Naive thymus-derived CD8-positive, alpha-beta T cell (primary cell): ENCODE measurements at regions of chr2 and their contacts with region 1.

Region 1: DNA sequence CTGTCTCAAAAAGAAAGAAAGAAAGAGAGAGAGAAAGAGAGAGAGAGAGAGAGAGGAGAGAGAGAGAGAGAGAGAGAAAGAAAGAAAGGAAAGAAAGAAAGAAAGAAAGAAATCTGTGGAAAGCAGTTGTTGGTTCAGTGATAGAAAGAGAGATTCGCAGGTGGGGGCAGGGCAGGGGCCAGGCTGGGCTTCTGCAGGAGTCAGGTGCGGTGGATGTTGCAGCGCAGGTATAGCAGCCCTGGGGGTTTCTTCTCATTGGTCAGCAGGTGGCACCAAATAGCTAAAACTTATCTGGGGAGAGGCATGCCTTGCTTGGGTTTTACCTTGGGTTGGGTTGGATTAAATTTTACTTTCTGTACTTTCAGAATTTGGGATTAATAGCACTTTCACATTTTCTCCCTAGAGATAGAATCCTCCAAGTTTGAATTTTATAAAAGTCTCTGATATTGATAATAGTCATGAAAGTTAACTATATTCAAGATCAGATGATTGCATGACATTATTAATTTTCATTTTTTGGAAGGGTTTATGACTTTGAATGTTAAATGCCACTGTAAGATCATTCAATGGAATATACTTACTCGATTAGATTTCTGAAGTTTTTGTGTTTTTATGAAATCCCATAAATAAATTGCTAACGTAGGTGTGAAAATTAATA is 66.6 kb downstream of the SPTBN1 start:
- DNase-seq: peak; percentile 45 to 82 (median 73)
- ATAC-seq: peak; percentile 100
- H3K4me3 Mint-ChIP-seq: peak overlapping the region in 4 of 10 donors; percentile 30 to 62 (median 36)
- H3K27ac Mint-ChIP-seq: peak overlapping the region in 6 of 10 donors; percentile 14 to 93 (median 55)
- H3K4me1 Mint-ChIP-seq: peaks cover 4 to 7% (median 4%) of the 10 kb centered on the region in 4 donors
- H3K27me3 Mint-ChIP-seq: peaks cover 3 to 15% (median 5%) of the 10 kb centered on the region in 5 donors

Region 2: DNA sequence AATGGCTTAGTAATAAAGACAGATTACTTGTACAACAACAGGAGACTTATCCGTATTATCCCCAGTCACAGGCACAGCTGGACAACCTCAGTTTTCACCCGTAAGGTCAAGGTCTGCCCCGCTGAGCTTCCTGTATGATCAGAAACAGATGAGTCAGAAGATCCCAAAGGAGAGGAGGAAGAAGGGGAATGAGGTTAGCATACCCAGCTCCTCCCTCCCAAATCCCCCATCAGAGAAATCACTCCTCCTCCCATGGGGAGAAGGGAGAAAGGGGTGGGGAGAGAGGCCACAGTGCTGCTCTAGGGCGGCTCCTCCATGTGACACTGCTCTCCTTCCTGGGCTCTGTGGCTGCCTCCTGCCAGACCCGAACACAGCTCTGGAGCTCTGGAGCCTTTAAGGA is 120.4 kb before region 1 on chr2:
- POLR2A ChIA-PET with region 1: no interaction called
- DNase-seq: no peak
- ATAC-seq: no peak
- H3K4me3 Mint-ChIP-seq: no peak overlapping the region
- H3K27ac Mint-ChIP-seq: no peak overlapping the region
- H3K4me1 Mint-ChIP-seq: peaks cover 0 to 9% (median 5%) of the 10 kb centered on the region in 4 donors
- H3K27me3 Mint-ChIP-seq: peaks cover 0 to 8% (median 0%) of the 10 kb centered on the region in 5 donors

Region 3: GRCh38 chr2:54541995-54542394 is 19.2 kb after region 1 on chr2:
- POLR2A ChIA-PET with region 1: no interaction called
- DNase-seq: no peak
- ATAC-seq: no peak
- H3K4me3 Mint-ChIP-seq: no peak overlapping the region
- H3K27ac Mint-ChIP-seq: no peak overlapping the region
- H3K4me1 Mint-ChIP-seq: peaks cover 0 to 5% (median 2%) of the 10 kb centered on the region in 4 donors
- H3K27me3 Mint-ChIP-seq: peaks cover 0 to 2% (median 0%) of the 10 kb centered on the region in 5 donors

Region 4: DNA sequence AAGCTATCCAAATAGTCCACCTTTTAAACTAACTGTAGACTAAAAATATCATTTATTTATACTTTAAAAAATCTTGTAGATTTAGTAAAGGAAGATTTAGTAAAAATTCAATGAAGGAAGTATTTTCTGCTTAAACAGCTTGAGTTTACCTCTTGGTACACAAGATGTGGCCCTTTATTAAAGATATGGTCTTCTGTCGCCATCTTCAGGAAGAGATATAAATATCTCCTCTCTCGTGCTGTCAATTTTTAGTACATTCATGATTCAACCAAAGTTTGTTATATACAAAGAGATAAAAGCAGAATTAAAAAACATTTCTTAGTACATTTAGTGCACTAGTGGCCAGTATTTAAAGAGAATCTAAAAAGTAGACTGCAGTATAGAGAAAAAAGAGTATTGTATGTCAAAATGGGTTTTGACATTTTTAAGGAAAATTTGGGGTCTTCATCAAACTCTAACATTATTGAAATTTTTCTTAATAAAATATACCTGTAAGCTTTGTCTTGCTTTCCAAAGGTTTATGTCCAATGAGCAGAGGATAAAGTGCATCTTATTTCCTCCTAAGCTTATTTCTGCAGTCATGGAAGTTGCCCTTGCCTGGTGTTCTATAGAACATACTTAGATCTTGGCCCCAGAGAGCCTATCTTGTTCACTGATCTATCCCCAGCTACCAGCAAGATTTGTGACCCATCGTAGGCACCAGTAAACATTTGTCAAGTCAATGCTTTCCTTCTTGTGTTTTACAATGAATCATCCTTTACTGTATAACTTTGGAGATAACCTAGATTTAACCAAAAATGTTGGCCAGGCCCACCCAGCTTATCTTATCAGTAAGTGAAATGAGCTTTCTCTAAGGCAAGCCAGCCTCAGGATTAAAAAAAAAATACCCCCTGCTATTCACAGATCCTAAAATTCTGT is 182.2 kb after region 1 on chr2:
- POLR2A ChIA-PET with region 1: interaction called, 10 read pairs
- DNase-seq: peak in 3 of 10 donors; percentile 54 to 67 (median 62)
- ATAC-seq: peak; percentile 36 to 56
- H3K4me3 Mint-ChIP-seq: no peak overlapping the region
- H3K27ac Mint-ChIP-seq: no peak overlapping the region
- H3K4me1 Mint-ChIP-seq: peaks cover 0 to 14% (median 4%) of the 10 kb centered on the region in 4 donors
- H3K27me3 Mint-ChIP-seq: peaks cover 0 to 17% (median 8%) of the 10 kb centered on the region in 5 donors